ENCODE measurements at regions of chr5 and their contacts with region 1.

Region 1: DNA sequence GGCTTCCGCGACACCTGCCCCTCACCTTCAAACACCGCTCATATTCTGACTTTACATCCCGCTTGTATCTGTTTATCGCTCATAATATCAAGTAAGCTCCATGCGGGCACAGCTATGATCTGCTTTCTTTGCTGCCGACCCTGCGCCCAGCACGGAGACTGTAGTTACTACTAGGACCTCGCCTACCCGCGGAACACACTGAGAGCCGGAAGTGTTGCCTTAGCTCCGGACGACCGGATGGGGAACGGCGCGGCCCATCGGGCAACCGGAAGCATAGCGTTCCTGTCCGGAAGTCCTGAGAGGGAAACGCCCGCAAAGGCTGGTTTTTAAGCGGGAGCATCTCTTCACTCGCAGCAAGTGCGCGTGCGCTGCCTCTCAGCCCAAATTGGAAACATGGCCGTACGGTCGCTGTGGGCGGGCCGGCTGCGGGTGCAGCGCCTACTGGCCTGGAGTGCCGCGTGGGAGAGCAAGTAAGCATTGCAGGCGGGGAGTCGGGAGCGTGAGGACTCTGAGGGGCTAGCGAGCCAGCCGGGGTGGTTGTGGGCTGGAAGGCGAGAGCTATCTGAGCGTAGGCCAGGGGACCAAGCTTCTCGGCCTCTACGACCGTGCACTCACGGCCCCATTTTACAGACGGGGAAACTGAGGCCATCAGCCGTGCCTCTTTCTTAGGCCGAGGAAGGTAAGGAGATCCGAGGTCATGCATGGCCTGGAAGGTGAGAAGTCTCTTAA is at the start of gene GRPEL2:
- DNase-seq: peak; percentile 96
- H3K4me3 ChIP-seq: peak within 1 kb of the TSS; percentile 50 to 84 (median 61)
- H3K27ac ChIP-seq: peak within 1 kb of the TSS; percentile 76 to 91 (median 87)
- H3K4me1 ChIP-seq: peaks cover 4 to 28% (median 12%) of the 10 kb centered on the region in 4 donors
- H3K27me3 ChIP-seq: no peaks in the 10 kb centered on the region
- CTCF ChIP-seq: peak in 1 of 5 experiments; percentile 5
- EP300 ChIP-seq: no peak
- POLR2A ChIP-seq: peak; percentile 58
- total RNA-seq, gene GRPEL2: 2.2 to 10.6 (median 6.4) TPM

Region 2: DNA sequence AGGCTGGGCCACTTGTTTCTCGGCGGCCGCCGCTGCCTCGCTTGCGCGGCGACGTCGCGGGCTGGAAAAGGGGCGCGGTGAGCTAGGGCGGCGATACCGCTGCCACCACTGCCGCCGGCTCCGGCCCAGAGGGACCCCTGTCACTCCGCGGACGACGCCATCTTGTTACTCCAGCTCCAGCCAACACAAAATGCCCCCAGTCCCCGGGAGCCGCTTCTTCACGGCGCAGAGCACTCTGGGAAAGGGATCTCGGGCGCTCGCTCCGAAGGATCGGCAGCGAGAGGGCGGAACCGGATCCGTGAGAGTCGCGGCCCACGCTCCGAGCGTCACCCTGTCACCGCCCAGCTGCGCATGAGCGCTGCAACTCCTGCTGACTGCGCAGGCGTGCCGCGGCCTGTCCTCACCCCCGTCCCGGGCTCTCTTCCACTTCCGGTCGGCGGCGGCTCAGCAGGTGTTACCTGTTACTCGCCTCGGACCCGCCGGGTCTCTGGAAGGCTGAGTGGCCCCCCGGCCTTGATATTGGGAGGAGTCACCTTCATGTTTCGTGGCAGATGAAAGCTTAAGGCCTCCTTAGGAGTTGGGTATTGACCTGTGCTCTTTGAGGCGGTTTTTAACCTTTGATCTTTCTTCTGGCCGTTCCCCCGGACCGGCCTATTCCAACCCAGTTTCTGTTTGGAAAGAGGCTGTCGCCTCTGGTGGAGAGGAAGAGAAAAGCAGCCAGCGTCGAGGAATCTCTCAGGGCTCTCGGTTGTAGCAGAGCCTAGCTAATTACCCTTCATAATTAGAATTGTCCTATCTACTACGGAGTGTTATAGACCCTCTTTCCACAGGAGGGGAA is 206.1 kb after region 1 on chr5 and contains the start of gene CSNK1A1:
- in situ Hi-C with region 1: loop called in 1 of 4 experiments (anchors 25 kb)
- intact Hi-C with region 1: no loop called
- DNase-seq: peak; percentile 99
- H3K4me3 ChIP-seq: peak within 1 kb of the TSS; percentile 75 to 84 (median 80)
- H3K27ac ChIP-seq: peak within 1 kb of the TSS; percentile 98 to 99 (median 98)
- H3K4me1 ChIP-seq: peaks cover 24 to 39% (median 29%) of the 10 kb centered on the region in 4 donors
- H3K27me3 ChIP-seq: no peaks in the 10 kb centered on the region
- CTCF ChIP-seq: peak; percentile 77 to 98 (median 85)
- EP300 ChIP-seq: no peak
- POLR2A ChIP-seq: peak; percentile 97
- total RNA-seq, gene CSNK1A1: 159 to 260 (median 184) TPM